ENCODE measurements at regions of chr19 and their contacts with region 1.

Region 1: GRCh38 chr19:18291590-18292461 is 10.4 kb upstream of the JUND start:
- DNase-seq: peak; percentile 96
- H3K4me3 Mint-ChIP-seq: peak overlapping the region; percentile 90
- H3K27ac Mint-ChIP-seq: peak overlapping the region; percentile 98
- H3K4me1 Mint-ChIP-seq: peaks cover 68% of the 10 kb centered on the region
- H3K27me3 Mint-ChIP-seq: no peaks in the 10 kb centered on the region

Region 2: GRCh38 chr19:18097217-18097992 is 194.4 kb before region 1 on chr19 and contains the start of gene MAST3:
- CTCF ChIA-PET with region 1: no interaction called
- POLR2A ChIA-PET with region 1: no interaction called
- intact Hi-C with region 1: loop called (anchors 10 kb)
- DNase-seq: peak; percentile 95
- H3K4me3 Mint-ChIP-seq: peak within 1 kb of the TSS; percentile 83
- H3K27ac Mint-ChIP-seq: peak within 1 kb of the TSS; percentile 58
- H3K4me1 Mint-ChIP-seq: peaks cover 24% of the 10 kb centered on the region
- H3K27me3 Mint-ChIP-seq: no peaks in the 10 kb centered on the region
- total RNA-seq, gene MAST3: 22.5 to 23.8 TPM

Region 3: DNA sequence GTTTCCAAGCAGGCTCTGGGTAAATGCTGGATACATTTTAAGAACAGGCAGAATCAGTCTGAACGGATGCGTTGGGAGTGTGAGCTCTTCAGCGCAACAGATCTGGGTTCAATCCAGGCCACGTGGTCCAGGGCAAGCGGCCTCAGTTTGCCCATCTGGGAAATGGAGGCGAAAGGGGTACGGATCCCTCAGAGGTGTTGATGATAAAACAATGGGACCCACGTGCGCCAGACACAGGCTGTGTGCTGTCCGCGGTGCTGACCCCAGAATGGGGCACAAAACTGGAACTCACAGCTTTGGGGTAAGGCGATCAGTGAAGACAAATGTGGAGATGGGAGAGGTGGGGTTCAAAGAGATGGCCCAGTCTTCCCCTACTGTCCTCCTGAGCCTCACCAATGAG is 52.5 kb before region 1 on chr19:
- CTCF ChIA-PET with region 1: no interaction called
- POLR2A ChIA-PET with region 1: no interaction called
- intact Hi-C with region 1: no loop called
- DNase-seq: no peak
- H3K4me3 Mint-ChIP-seq: no peak overlapping the region
- H3K27ac Mint-ChIP-seq: no peak overlapping the region
- H3K4me1 Mint-ChIP-seq: no peaks in the 10 kb centered on the region
- H3K27me3 Mint-ChIP-seq: peaks cover 28% of the 10 kb centered on the region

Region 4: DNA sequence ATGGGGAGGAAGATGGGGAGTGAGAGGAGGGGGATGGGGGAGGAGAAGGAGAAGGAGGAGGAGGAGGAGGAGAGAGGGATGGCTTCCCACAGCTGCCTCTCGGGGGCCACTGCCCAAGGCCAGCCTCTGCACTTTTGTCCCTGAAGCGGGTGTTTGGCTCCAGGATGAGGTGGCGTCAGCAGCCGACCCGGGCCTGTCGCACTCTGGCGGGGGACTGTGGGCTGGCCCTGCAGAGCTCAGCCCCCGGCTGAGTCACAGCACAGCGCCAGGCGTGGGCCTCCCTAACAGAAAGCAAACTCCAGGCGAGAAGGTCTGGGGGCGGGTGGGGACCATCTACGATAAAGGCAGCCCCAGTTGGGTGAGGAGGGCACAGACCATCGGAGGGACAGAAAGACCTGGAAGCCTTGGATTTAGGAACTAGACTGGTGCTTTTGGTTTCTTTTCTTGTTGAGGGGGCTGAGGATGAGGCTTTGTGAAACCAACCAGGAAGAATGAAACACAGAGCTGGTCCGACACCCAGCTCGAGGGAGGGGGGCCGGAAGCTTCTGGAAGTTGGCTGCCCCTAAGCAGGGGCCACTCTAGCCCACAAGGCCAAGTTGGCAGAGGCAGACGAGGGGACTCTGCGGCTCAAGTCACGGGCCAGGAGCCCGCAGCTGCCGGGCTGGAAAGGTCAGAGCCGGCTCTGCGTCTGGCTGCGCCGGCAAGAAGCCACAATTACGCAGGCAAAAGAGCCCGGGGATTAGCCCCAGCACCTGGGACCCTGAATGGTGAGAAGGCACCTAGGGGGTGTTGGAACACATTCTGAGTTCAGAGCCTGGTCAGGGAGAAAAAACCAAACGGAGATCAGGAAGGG is 12.9 kb after region 1 on chr19:
- CTCF ChIA-PET with region 1: interaction called, 44 read pairs
- POLR2A ChIA-PET with region 1: interaction called, 97 read pairs
- intact Hi-C with region 1: loop called (anchors 1 kb)
- DNase-seq: peak; percentile 92
- H3K4me3 Mint-ChIP-seq: peak overlapping the region; percentile 96
- H3K27ac Mint-ChIP-seq: peak overlapping the region; percentile 99
- H3K4me1 Mint-ChIP-seq: peaks cover 41% of the 10 kb centered on the region
- H3K27me3 Mint-ChIP-seq: no peaks in the 10 kb centered on the region

Region 5: DNA sequence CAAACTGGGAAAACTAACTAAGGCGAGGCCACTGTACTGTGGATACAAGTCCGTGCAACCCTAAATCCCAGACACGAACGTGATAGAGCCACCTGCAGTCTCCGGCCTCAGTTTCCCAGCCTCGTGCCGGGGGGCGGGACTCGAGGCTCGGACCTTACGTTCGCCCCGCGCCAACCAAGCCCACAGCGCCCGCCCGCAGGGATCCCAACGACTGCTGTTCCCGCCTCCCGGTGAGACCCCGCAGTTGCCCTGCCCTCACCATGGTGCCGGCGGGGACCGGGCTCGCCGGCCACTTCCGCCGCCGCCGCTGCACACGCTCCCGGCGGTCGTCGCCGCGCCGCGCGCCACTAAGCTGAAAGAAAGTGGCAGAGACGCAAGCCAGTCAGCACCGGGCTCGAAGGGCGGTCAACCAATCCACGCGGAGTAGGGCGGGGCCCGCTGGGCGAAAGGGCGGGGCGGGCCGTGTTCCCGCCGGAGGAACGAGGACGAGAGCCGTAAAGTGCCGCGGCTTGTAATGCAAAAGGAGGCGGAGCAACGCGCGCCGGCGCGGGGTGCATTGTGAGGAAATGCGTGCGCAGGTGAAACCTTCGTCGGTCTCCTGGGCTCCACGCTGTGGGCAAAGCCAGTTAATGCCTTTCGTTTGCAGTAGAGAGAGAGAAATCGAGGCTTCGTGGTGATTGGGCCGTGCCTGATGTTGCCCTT is 31.1 kb after region 1 on chr19 and contains the start of gene LSM4:
- CTCF ChIA-PET with region 1: interaction called, 12 read pairs
- POLR2A ChIA-PET with region 1: interaction called, 15 read pairs
- intact Hi-C with region 1: no loop called
- DNase-seq: peak; percentile 100
- H3K4me3 Mint-ChIP-seq: peak within 1 kb of the TSS; percentile 83
- H3K27ac Mint-ChIP-seq: peak within 1 kb of the TSS; percentile 95
- H3K4me1 Mint-ChIP-seq: peaks cover 48% of the 10 kb centered on the region
- H3K27me3 Mint-ChIP-seq: no peaks in the 10 kb centered on the region
- total RNA-seq, gene LSM4: 356 to 361 TPM

Measured in activated CD4-positive, alpha-beta memory T cell treated with anti-CD3 and anti-CD28 coated beads for 36 hours (primary cell).